MCF 10A (cell line): ENCODE measurements at regions of chr7 and their contacts with region 1.

Region 1: DNA sequence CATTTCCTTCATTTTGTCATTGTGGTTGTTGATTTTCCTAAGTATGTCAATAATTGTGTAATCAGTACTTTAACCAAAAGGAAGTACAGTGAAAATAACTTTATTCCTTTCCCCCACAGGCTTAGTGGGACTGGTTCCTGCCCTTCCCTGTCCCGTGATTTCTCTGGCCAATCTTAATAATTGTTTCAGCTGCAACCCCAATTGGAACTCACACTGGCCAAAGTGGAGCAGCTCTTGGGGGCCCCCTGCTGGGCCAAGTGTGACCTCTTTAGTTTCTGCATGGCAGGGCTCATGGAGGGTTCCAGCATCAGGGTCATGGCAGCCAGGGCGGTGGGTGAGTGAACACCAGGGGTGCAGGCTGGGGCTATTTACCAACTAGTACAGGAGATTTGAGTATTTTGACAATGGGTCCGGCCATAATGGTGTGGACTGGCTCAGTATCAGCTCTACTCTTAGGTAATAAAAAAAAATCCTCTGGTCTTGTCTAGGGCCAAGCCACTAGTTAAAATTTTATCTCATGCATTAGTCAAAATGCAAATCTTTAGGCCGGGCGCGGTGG is 31.7 kb downstream of the CYCS start:
- DNase-seq: peak; percentile 85
- H3K4me3 Mint-ChIP-seq: no peak overlapping the region
- H3K27ac Mint-ChIP-seq: no peak overlapping the region
- H3K4me1 Mint-ChIP-seq: peaks cover 7% of the 10 kb centered on the region
- H3K27me3 Mint-ChIP-seq: no peaks in the 10 kb centered on the region
- CTCF ChIP-seq: peak; percentile 82

Region 2: DNA sequence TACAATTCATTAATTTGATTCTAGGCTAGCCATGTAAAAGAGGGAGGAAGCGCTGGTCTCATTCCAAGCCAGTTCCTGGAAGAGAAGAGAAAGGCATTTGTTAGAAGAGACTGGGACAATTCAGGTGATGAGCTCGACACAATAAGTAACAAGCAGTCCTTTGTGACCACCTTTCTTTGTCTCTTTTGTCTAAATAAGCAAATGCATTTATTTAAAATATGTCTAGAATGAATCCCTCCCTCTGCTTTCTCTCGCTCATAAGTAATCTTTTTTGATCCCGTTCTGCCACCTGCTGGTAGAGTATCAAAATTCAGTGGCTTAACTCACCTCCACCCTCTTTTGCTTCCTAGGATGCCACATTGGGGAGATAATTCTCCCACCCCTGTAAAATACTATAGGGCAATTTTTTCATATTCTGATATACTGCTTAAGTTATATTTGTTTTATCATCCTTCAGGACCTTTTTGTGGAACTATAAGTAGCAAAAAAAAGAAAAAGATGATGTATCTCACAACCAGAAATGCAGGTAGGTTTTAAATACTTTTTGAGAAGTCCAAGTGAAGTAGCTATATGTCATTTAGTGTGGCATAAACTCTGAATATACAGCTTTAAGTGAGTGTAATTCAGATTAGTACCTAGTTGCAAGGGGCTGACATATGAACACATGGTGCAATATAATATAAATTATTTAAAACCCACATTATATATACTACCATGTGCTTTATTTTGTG is 427.6 kb before region 1 on chr7:
- CTCF ChIA-PET with region 1: interaction called, 25 read pairs
- POLR2A ChIA-PET with region 1: interaction called, 3 read pairs
- intact Hi-C with region 1: loop called (anchors 5 kb)
- DNase-seq: peak; percentile 68
- H3K4me3 Mint-ChIP-seq: no peak overlapping the region
- H3K27ac Mint-ChIP-seq: no peak overlapping the region
- H3K4me1 Mint-ChIP-seq: peaks cover 21% of the 10 kb centered on the region
- H3K27me3 Mint-ChIP-seq: no peaks in the 10 kb centered on the region
- CTCF ChIP-seq: peak; percentile 63

Region 3: DNA sequence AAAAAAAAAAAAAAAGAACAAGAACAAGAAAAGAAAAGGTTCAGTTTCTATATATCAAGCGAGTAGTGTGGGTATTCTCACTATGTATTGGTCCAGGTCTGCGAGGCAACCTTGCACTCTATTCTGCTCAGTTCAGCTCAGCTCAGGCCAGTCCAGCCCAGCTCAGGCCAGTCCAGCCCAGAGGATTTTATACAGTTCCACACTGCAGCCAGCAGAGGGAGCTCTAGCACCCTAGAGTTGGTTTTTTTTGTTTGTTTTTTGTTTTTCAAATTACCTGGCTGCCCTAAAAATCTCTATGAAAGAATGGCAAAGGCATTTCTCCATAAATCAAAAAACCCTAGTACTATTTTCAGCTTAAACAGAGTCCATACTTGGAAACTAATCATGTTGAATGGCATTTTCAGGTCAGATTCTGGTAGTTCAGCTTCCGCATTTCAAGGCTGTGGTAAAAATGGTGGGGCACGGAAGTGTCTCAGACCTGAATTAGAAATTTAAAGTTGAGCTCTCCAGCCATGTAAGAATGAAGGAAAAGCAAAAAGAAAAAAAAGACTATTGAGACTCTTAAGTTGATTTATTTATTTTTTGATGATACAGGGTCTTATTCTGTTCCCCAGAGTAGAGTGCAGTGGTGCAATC is 280.9 kb before region 1 on chr7:
- CTCF ChIA-PET with region 1: interaction called, 186 read pairs
- POLR2A ChIA-PET with region 1: interaction called, 6 read pairs
- intact Hi-C with region 1: loop called (anchors 1 kb)
- DNase-seq: peak; percentile 60
- H3K4me3 Mint-ChIP-seq: no peak overlapping the region
- H3K27ac Mint-ChIP-seq: no peak overlapping the region
- H3K4me1 Mint-ChIP-seq: peaks cover 3% of the 10 kb centered on the region
- H3K27me3 Mint-ChIP-seq: no peaks in the 10 kb centered on the region
- CTCF ChIP-seq: peak; percentile 82

Region 4: GRCh38 chr7:24877790-24878311 is 215.5 kb before region 1 on chr7:
- CTCF ChIA-PET with region 1: interaction called, 10 read pairs
- POLR2A ChIA-PET with region 1: no interaction called
- intact Hi-C with region 1: no loop called
- DNase-seq: no peak
- H3K4me3 Mint-ChIP-seq: no peak overlapping the region
- H3K27ac Mint-ChIP-seq: no peak overlapping the region
- H3K4me1 Mint-ChIP-seq: peaks cover 4% of the 10 kb centered on the region
- H3K27me3 Mint-ChIP-seq: no peaks in the 10 kb centered on the region
- CTCF ChIP-seq: no peak

Region 5: DNA sequence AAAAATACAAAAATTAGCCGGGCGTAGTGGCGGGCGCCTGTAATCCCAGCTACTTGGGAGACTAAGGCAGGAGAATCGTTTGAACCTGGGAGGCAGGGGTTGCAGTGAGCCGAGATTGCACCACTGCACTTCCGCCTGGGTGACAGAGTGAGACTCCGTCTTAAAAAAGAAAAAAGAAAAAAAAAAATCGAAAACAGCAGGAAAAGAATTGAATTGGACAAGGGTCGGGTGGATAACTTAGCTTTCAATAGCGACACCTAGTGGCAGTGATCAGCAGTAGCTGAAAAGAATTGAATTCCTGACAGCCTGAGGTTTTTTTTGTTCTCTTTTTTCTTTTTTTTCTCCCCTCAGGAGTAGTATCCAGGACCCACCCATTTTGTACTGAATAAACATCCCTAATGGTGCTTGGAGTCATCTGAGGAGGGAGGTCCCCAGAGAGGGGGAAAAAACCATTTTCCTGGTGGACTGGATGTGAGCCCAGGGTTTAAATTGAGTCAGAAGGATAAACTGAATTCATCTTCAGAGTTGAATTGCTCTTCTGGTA is 23.4 kb before region 1 on chr7:
- CTCF ChIA-PET with region 1: interaction called, 16 read pairs
- POLR2A ChIA-PET with region 1: interaction called, 3 read pairs
- intact Hi-C with region 1: no loop called
- DNase-seq: peak; percentile 70
- H3K4me3 Mint-ChIP-seq: no peak overlapping the region
- H3K27ac Mint-ChIP-seq: no peak overlapping the region
- H3K4me1 Mint-ChIP-seq: peaks cover 8% of the 10 kb centered on the region
- H3K27me3 Mint-ChIP-seq: no peaks in the 10 kb centered on the region
- CTCF ChIP-seq: peak; percentile 85

Region 6: GRCh38 chr7:25158966-25159365 is 65.6 kb after region 1 on chr7:
- CTCF ChIA-PET with region 1: interaction called, 6 read pairs
- POLR2A ChIA-PET with region 1: no interaction called
- intact Hi-C with region 1: loop called (anchors 2 kb)
- DNase-seq: no peak
- H3K4me3 Mint-ChIP-seq: no peak overlapping the region
- H3K27ac Mint-ChIP-seq: no peak overlapping the region
- H3K4me1 Mint-ChIP-seq: peaks cover 5% of the 10 kb centered on the region
- H3K27me3 Mint-ChIP-seq: no peaks in the 10 kb centered on the region
- CTCF ChIP-seq: no peak